Right ventricle myocardium superior (tissue), 1 donor: ENCODE measurements at regions of chr3 and their contacts with region 1.

Region 1: DNA sequence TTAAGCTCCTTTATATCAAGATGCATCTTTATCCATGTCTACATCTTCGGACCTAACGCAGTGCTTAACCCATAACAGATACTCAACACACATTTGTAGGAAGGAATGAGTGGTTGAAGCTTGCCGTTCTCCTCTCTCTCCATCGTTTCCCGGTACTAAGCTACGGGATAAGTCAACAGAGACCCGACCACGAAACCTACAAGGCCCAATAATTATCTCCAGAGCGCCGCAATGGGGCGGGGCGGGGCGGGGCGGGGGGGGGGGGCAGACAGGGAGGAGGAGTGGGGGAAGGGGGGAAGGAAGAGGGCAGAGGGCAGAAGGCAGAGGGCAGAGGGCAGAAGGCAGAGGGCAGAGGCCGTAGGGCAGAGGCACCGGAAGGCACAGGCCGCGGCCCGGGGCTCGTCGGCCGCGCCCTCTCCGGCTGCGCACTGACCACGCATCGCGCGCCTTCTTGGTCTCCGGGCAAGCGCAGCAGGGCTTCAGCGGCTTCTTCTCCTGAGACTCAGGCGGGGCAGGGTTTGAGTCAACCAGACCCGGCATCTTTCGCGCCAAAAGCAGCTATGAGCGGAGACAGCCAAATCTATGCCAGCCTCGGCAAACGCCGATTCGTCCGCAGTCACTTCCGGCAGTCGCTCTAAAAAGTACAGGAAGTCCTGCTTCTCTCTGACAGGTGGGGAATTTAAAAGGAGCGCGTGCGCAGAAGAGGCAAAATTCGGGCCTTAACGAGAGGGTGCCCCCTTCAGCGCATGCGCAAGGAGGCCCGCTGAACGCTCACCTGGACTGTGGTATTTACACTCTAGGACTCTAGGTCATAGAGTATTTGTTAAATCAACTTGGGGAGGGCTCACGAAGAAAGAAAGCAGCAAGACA is at the start of gene COX17:
- DNase-seq: peak; percentile 96
- ATAC-seq: peak; percentile 91
- total RNA-seq, gene COX17: 168 TPM

Region 2: GRCh38 chr3:119279101-119279554 is 397.9 kb before region 1 on chr3:
- intact Hi-C with region 1: loop called (anchors 5 kb)
- DNase-seq: peak; percentile 85
- ATAC-seq: peak; percentile 87

Region 3: DNA sequence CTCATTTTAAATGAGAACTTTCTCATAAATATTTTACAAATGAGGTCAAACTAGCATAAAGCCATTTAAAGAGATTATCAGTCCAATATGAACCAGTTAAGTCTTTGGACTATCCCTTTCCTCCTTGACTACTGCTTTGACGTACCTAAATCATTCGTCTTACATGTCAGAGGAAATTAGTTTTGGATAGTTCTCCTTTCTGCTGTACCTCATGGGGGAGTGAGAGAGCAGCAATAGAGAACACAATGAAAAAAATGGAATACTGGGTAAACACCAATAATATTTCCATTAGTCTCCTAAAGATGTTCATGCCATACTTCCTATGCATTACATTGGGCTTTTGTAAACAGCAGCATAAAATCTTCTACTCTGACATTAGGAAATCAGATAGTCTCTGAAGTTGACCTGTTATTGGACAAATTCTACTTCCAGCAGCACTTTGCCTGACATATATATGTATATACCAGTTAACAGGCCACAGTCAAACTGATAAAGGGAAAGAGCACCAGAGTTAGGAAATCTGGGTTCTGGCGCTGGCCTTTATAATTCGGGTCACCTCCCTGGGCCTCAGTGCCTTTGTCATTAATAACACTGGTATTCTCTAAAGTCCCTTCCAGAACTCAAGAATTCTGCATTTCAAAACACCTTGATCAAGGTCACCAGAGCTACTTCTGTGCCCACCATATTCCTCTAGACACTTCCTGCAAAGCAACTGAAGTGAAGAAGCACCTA is 151.9 kb before region 1 on chr3:
- intact Hi-C with region 1: loop called (anchors 10 kb)
- DNase-seq: no peak
- ATAC-seq: no peak

Region 4: GRCh38 chr3:119600732-119601131 is 76.3 kb before region 1 on chr3:
- intact Hi-C with region 1: loop called (anchors 5 kb)
- DNase-seq: peak; percentile 53
- ATAC-seq: peak; percentile 71